OCI-LY7 (cell line): ENCODE measurements at regions of chr15 and their contacts with region 1.

Region 1: GRCh38 chr15:80567721-80568157 is 127.4 kb upstream of the ABHD17C start:
- DNase-seq: peak; percentile 38
- H3K4me3 ChIP-seq: no peak overlapping the region
- H3K27ac ChIP-seq: no peak overlapping the region
- H3K4me1 ChIP-seq: no peaks in the 10 kb centered on the region
- CTCF ChIP-seq: peak; percentile 74

Region 2: DNA sequence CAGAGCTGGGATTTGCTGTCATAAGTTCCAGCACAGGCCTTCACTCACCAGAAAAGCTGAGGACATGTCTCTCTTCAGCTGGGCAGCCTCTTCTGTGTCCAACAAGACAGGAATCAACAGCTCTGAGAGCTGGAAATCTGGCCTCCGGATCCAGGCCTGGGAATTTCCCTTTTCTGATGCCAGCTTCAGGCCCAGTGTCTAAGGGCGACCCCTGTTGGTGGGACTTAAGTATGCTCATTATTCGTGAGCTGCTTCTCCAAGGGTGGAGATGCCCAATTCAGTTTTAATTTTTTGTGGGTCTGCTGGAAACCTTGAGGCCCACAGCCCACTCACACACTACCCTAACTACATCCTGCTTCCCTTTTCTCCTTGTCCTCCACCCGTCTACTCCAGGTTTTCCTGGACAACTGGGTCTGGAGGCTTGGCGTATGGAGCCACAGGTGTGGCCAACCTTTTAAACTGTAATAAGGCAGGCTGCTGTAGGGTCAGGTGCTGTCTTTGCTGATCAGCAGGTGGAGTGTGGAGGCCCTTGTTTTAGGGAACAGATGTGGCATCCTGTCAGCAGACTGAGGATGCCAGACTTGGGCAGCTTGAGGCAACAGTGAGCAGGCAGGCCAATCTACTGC is 208.8 kb after region 1 on chr15:
- CTCF ChIA-PET with region 1: no interaction called
- POLR2A ChIA-PET with region 1: no interaction called
- intact Hi-C with region 1: loop called (anchors 10 kb)
- DNase-seq: peak; percentile 51
- H3K4me3 ChIP-seq: no peak overlapping the region
- H3K27ac ChIP-seq: no peak overlapping the region
- H3K4me1 ChIP-seq: no peaks in the 10 kb centered on the region
- CTCF ChIP-seq: peak; percentile 91

Region 3: GRCh38 chr15:80804965-80805495 is 237.3 kb after region 1 on chr15:
- CTCF ChIA-PET with region 1: no interaction called
- POLR2A ChIA-PET with region 1: no interaction called
- intact Hi-C with region 1: no loop called
- DNase-seq: no peak
- H3K4me3 ChIP-seq: no peak overlapping the region
- H3K27ac ChIP-seq: no peak overlapping the region
- H3K4me1 ChIP-seq: no peaks in the 10 kb centered on the region
- CTCF ChIP-seq: no peak

Region 4: DNA sequence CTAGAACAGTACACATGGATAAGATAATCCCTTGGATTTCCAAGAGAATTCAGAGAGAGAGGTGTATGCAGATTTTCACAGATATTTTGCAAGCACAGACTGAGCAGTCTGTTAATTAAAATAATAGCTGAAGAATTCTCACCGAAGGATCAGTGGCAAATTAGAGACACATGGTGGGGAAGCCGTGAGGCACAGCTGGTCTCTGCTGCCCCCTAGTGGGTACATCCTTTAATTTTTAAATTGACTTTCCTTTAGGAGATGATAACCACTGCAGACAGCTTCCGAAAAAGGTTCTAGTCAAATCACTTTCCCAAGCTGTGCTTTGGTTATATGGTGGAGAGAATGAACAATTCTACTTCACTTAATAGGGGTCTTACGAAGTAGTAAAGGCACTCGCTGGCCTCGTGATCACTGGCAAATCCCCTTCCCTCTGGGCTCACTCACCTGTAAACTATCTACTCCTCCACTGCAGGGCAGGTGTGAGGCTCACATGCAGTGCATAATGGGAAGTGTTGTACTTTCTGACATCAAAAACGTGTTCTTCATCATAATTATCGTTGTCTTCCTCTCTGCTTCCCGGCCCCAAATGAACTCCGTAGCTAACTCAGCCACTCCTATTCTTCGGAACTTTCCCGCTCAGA is 402.4 kb after region 1 on chr15:
- CTCF ChIA-PET with region 1: no interaction called
- POLR2A ChIA-PET with region 1: no interaction called
- intact Hi-C with region 1: loop called (anchors 5 kb)
- DNase-seq: peak; percentile 64
- H3K4me3 ChIP-seq: no peak overlapping the region
- H3K27ac ChIP-seq: no peak overlapping the region
- H3K4me1 ChIP-seq: no peaks in the 10 kb centered on the region
- CTCF ChIP-seq: peak; percentile 95